ENCODE measurements at regions of chr5 and their contacts with region 1.

Region 1: GRCh38 chr5:58071566-58071965 is 388.3 kb downstream of the PLK2 start:
- DNase-seq: peak; percentile 33 to 87
- ATAC-seq: peak; percentile 93 to 98 (median 98)
- H3K4me3 ChIP-seq: no peak overlapping the region
- H3K27ac ChIP-seq: peak overlapping the region; percentile 5 to 92 (median 77)
- H3K4me1 ChIP-seq: peaks cover 2 to 66% (median 52%) of the 10 kb centered on the region in 9 donors
- H3K27me3 ChIP-seq: no peaks in the 10 kb centered on the region
- CTCF ChIP-seq: peak in 1 of 9 donors; percentile 9

Region 2: DNA sequence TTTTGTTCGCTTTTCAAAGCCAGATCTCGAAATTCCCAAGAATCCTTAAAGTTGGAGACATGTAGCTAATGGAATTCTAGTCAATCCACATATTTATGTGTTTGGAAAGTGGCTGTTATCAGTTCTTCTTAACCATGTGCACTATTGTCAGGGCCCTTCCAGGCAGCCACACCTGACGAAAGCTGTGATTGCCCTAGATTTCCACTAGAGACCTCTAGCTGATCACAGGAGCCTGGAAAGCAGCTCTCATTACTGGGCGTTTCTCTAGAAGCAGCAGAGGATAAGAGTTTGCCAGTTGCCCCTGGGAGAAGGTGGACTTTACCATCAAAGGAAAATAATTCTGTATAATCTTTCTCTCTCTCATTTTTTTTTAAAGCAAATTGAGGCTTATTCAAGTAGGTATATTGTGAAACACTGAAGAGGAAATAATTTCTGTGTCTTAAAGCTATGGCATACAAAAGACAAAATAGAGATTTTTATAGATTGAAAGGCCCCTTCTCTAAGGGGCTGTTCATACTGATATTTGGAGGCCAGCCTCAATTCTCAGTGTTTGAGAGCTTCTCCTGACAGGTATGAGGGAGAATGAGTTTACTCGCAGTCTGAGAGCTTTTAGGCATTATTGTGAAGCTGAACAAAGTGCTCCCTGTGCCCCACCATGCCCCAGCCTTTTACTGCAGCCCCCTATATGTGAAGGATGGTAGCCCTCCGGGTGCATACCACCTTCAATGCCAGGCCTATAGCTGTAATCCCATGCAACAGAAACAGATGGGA is 183.5 kb before region 1 on chr5:
- intact Hi-C with region 1: loop called in 2 of 10 experiments (anchors 5 kb)
- DNase-seq: peak in 1 of 2 donors; percentile 69
- ATAC-seq: peak; percentile 89 to 93 (median 90)
- H3K4me3 ChIP-seq: no peak overlapping the region
- H3K27ac ChIP-seq: peak overlapping the region in 1 of 10 donors; percentile 8
- H3K4me1 ChIP-seq: peaks cover 0 to 32% (median 11%) of the 10 kb centered on the region in 9 donors
- H3K27me3 ChIP-seq: no peaks in the 10 kb centered on the region
- CTCF ChIP-seq: peak; percentile 42 to 82 (median 66)

Region 3: GRCh38 chr5:57956636-57957035 is 114.9 kb before region 1 on chr5:
- intact Hi-C with region 1: no loop called
- DNase-seq: no peak
- ATAC-seq: no peak
- H3K4me3 ChIP-seq: no peak overlapping the region
- H3K27ac ChIP-seq: no peak overlapping the region
- H3K4me1 ChIP-seq: peaks cover 0 to 9% (median 0%) of the 10 kb centered on the region in 9 donors
- H3K27me3 ChIP-seq: no peaks in the 10 kb centered on the region
- CTCF ChIP-seq: no peak

Region 4: DNA sequence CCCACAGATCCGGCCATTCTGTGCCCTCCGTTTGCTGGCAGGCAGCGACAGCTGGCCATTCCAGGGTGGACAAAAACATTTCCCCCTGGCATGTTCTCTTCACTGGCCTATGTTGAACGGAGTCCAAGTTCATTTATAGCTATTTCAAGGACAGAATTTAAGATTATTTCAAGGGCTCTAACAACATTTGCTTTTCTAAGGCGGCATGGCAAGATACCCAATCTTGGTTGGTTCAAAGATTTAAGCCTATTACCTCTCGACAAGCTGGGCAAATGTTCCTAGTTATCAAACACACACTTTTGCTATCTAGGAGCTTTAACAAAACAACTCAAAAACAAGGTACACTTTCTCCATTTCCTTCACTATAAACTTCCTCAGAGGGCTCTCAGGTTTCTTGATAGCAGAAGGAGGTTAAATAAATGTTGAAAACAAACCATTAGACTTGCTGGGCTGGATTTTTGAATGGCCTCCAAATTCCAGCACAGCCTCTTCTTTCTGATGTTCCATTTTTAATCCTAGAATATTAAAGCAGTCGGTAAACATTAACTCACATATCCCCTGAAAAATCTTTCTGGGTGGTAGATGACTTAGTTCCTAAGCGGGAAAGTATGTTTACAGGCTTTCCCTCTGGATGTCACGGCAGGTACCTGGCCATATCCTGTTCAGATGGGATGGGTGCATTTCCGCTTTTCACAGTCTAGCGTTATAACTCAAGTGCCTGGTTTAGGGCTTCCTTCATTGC is 56.1 kb after region 1 on chr5:
- intact Hi-C with region 1: loop called in 1 of 10 experiments (anchors 5 kb)
- DNase-seq: no peak
- ATAC-seq: peak in 7 of 8 donors; percentile 25 to 81 (median 61)
- H3K4me3 ChIP-seq: peak overlapping the region in 1 of 10 donors; percentile 0
- H3K27ac ChIP-seq: peak overlapping the region in 7 of 10 donors; percentile 4 to 73 (median 70)
- H3K4me1 ChIP-seq: peaks cover 0 to 31% (median 23%) of the 10 kb centered on the region in 9 donors
- H3K27me3 ChIP-seq: no peaks in the 10 kb centered on the region
- CTCF ChIP-seq: no peak

Region 5: GRCh38 chr5:58246461-58246944 is 174.9 kb after region 1 on chr5:
- intact Hi-C with region 1: loop called in 4 of 10 experiments (anchors 5 to 10 kb)
- DNase-seq: no peak
- ATAC-seq: peak in 4 of 8 donors; percentile 46 to 72 (median 57)
- H3K4me3 ChIP-seq: no peak overlapping the region
- H3K27ac ChIP-seq: peak overlapping the region in 9 of 10 donors; percentile 24 to 91 (median 57)
- H3K4me1 ChIP-seq: peaks cover 0 to 65% (median 13%) of the 10 kb centered on the region in 9 donors
- H3K27me3 ChIP-seq: no peaks in the 10 kb centered on the region
- CTCF ChIP-seq: no peak

Measured in heart right ventricle (tissue), 16 donors.